ENCODE measurements at regions of chr1 and their contacts with region 1.

Region 1: GRCh38 chr1:94045465-94046056 is 75.4 kb downstream of the ABCA4 start:
- DNase-seq: peak; percentile 93 to 98 (median 95)
- ATAC-seq: peak; percentile 95 to 96
- H3K4me3 ChIP-seq: peak overlapping the region; percentile 8
- H3K27ac ChIP-seq: peak overlapping the region; percentile 92
- H3K4me1 ChIP-seq: peaks cover 18% of the 10 kb centered on the region
- H3K27me3 ChIP-seq: no peaks in the 10 kb centered on the region

Region 2: GRCh38 chr1:93995837-93996536 is 49.6 kb before region 1 on chr1:
- intact Hi-C with region 1: no loop called
- DNase-seq: no peak
- ATAC-seq: no peak
- H3K4me3 ChIP-seq: no peak overlapping the region
- H3K27ac ChIP-seq: no peak overlapping the region
- H3K4me1 ChIP-seq: no peaks in the 10 kb centered on the region
- H3K27me3 ChIP-seq: no peaks in the 10 kb centered on the region

Region 3: GRCh38 chr1:94247138-94248094 is 201.9 kb after region 1 on chr1:
- intact Hi-C with region 1: loop called in 1 of 4 experiments (anchors 10 kb)
- DNase-seq: peak; percentile 84 to 93 (median 93)
- ATAC-seq: peak; percentile 94 to 96
- H3K4me3 ChIP-seq: peak overlapping the region; percentile 73
- H3K27ac ChIP-seq: peak overlapping the region; percentile 87
- H3K4me1 ChIP-seq: no peaks in the 10 kb centered on the region
- H3K27me3 ChIP-seq: no peaks in the 10 kb centered on the region

Region 4: DNA sequence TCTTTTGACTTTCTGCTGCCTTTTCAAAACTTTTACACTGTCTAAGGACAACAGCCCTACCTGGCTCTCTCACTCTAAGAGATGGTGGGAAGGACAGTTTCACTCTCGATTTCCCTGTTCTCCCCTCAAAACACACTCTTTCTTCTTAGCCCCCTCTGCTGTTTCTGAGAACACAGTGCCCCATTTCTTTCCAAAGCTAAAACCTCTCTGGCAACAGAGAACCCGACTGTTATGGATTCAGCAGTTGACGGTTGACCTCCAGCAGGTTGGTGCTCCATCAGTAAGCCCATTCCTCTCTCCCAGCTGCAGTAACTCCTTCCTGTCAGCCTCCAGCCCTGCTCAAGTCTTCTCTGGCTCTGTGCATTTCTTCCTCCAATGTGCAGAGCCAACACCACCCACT is 284.4 kb after region 1 on chr1:
- intact Hi-C with region 1: loop called (anchors 5 kb)
- DNase-seq: no peak
- ATAC-seq: peak; percentile 37 to 40
- H3K4me3 ChIP-seq: no peak overlapping the region
- H3K27ac ChIP-seq: peak overlapping the region; percentile 32
- H3K4me1 ChIP-seq: peaks cover 2% of the 10 kb centered on the region
- H3K27me3 ChIP-seq: no peaks in the 10 kb centered on the region

Region 5: GRCh38 chr1:94335950-94336349 is 290.4 kb after region 1 on chr1:
- intact Hi-C with region 1: loop called in 3 of 4 experiments (anchors 5 kb)
- DNase-seq: peak; percentile 65 to 70 (median 69)
- ATAC-seq: peak; percentile 86 to 88
- H3K4me3 ChIP-seq: no peak overlapping the region
- H3K27ac ChIP-seq: no peak overlapping the region
- H3K4me1 ChIP-seq: no peaks in the 10 kb centered on the region
- H3K27me3 ChIP-seq: no peaks in the 10 kb centered on the region

Region 6: DNA sequence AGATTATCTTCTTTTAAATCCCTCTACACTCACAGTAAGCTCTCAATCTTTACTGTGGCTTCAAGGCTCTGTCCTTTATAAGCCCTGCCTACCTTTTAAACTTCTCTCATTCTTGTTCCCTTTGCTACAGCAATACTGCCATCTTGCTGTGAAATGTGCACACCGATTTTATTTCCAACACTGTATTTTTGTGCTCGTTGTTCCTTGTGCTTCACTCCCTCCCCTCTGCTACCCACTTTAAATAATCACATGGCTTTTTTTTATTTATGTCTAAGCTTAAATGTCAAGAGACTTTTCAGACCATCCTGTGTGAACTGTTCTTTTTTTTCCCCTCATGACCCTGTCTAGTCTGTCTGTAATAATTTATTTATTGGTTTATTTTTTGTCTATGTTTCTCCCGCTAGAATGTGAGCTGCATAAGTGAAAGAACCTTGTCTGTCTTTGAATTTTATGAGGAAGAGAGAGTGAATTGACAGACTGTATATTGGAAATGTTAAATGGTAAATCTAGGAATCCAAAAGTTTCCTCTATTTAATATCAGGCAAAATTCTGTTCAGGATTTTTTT is 418.3 kb after region 1 on chr1:
- intact Hi-C with region 1: loop called in 1 of 4 experiments (anchors 10 kb)
- DNase-seq: no peak
- ATAC-seq: peak; percentile 54 to 83
- H3K4me3 ChIP-seq: no peak overlapping the region
- H3K27ac ChIP-seq: no peak overlapping the region
- H3K4me1 ChIP-seq: peaks cover 1% of the 10 kb centered on the region
- H3K27me3 ChIP-seq: no peaks in the 10 kb centered on the region

Region 7: GRCh38 chr1:94599095-94599813 is 553.7 kb after region 1 on chr1:
- intact Hi-C with region 1: no loop called
- DNase-seq: peak in 1 of 3 donors; percentile 66
- ATAC-seq: peak; percentile 68 to 84
- H3K4me3 ChIP-seq: no peak overlapping the region
- H3K27ac ChIP-seq: no peak overlapping the region
- H3K4me1 ChIP-seq: no peaks in the 10 kb centered on the region
- H3K27me3 ChIP-seq: no peaks in the 10 kb centered on the region

Measured in right cardiac atrium (tissue), 5 donors.